Activated CD8-positive, alpha-beta T cell treated with anti-CD3 and anti-CD28 coated beads for 36 hours (primary cell): ENCODE measurements at regions of chr1 and their contacts with region 1.

Region 1: DNA sequence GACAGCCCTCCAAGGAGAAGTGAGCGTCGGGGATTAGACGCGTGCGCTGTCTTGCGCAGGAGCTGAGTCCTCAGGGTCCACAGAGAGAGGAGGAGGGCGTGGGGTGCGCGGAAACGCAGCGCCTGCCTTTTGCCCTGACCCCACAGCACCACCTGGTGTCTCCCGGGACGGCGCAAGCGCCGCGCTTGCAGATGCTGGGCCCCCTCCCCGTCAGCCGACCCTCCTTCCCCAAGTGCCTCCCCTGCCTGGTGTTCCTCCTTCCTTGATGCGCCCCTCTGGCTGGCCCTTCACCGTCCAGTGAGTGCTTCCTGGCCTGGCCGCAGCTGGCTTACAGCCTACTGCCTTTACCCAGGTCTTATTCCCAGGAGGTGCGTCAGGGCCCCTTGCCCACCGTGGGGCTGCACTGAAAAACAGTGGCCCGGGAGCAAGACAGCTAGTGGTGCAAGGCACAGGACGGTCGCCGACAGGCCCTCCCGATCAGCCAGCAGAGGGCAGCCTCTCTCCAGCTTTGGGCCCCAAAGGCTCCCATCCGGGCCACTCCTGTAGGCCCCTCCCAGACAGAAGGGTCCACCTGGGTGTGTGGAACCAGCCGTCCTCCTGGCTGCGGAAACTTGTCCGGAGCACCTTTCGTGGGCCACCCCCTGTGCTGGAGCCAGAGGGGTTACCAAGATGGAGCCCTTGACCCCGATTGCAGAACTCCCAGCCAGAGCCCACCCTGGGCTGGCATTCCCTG is 12.9 kb upstream of the PHLDA3 start:
- DNase-seq: peak; percentile 87
- ATAC-seq: peak; percentile 90
- H3K4me3 Mint-ChIP-seq: peak overlapping the region; percentile 57
- H3K27ac Mint-ChIP-seq: no peak overlapping the region
- H3K4me1 Mint-ChIP-seq: peaks cover 14% of the 10 kb centered on the region
- H3K27me3 Mint-ChIP-seq: peaks cover 22% of the 10 kb centered on the region
- CTCF ChIP-seq: peak; percentile 82

Region 2: DNA sequence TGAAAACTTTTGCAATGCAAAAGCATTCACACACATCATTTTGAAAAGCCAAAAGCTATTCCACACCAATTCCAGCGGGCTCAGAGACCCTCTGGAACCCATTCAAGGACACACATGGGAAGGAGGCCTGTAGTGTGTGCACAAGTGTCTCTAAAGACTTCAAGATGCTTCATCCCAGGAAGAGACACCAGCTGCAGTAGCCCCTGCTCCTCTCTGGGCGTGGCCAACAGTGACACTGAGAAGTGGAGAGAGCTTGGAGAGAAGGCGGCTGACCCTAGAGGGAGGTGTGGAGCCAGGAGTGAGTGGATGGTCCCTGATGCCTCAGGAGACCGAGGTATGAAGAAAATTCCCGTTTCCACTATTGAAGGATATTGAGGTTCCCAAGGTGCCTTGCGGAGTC is 45.5 kb before region 1 on chr1:
- CTCF ChIA-PET with region 1: interaction called, 30 read pairs
- POLR2A ChIA-PET with region 1: interaction called, 3 read pairs
- intact Hi-C with region 1: no loop called
- DNase-seq: no peak
- ATAC-seq: no peak
- H3K4me3 Mint-ChIP-seq: no peak overlapping the region
- H3K27ac Mint-ChIP-seq: no peak overlapping the region
- H3K4me1 Mint-ChIP-seq: peaks cover 6% of the 10 kb centered on the region
- H3K27me3 Mint-ChIP-seq: peaks cover 17% of the 10 kb centered on the region
- CTCF ChIP-seq: no peak

Region 3: GRCh38 chr1:201456499-201457309 is 25.2 kb before region 1 on chr1:
- CTCF ChIA-PET with region 1: interaction called, 149 read pairs
- POLR2A ChIA-PET with region 1: no interaction called
- intact Hi-C with region 1: no loop called
- DNase-seq: no peak
- ATAC-seq: no peak
- H3K4me3 Mint-ChIP-seq: no peak overlapping the region
- H3K27ac Mint-ChIP-seq: no peak overlapping the region
- H3K4me1 Mint-ChIP-seq: peaks cover 12% of the 10 kb centered on the region
- H3K27me3 Mint-ChIP-seq: peaks cover 10% of the 10 kb centered on the region
- CTCF ChIP-seq: no peak

Region 4: GRCh38 chr1:201468844-201469511 is 12.9 kb before region 1 on chr1 and contains the start of gene PHLDA3:
- CTCF ChIA-PET with region 1: interaction called, 13 read pairs
- POLR2A ChIA-PET with region 1: no interaction called
- intact Hi-C with region 1: no loop called
- DNase-seq: peak; percentile 73
- ATAC-seq: peak; percentile 84
- H3K4me3 Mint-ChIP-seq: peak within 1 kb of the TSS; percentile 67
- H3K27ac Mint-ChIP-seq: no peak within 1 kb of the TSS
- H3K4me1 Mint-ChIP-seq: peaks cover 3% of the 10 kb centered on the region
- H3K27me3 Mint-ChIP-seq: peaks cover 48% of the 10 kb centered on the region
- CTCF ChIP-seq: no peak
- total RNA-seq, gene PHLDA3: 6.2 to 7.9 TPM

Region 5: GRCh38 chr1:201511941-201512539 is 30.1 kb after region 1 on chr1:
- CTCF ChIA-PET with region 1: interaction called, 796 read pairs
- POLR2A ChIA-PET with region 1: interaction called, 9 read pairs
- intact Hi-C with region 1: loop called (anchors 1 kb)
- DNase-seq: no peak
- ATAC-seq: no peak
- H3K4me3 Mint-ChIP-seq: no peak overlapping the region
- H3K27ac Mint-ChIP-seq: no peak overlapping the region
- H3K4me1 Mint-ChIP-seq: peaks cover 16% of the 10 kb centered on the region
- H3K27me3 Mint-ChIP-seq: no peaks in the 10 kb centered on the region
- CTCF ChIP-seq: no peak

Region 6: DNA sequence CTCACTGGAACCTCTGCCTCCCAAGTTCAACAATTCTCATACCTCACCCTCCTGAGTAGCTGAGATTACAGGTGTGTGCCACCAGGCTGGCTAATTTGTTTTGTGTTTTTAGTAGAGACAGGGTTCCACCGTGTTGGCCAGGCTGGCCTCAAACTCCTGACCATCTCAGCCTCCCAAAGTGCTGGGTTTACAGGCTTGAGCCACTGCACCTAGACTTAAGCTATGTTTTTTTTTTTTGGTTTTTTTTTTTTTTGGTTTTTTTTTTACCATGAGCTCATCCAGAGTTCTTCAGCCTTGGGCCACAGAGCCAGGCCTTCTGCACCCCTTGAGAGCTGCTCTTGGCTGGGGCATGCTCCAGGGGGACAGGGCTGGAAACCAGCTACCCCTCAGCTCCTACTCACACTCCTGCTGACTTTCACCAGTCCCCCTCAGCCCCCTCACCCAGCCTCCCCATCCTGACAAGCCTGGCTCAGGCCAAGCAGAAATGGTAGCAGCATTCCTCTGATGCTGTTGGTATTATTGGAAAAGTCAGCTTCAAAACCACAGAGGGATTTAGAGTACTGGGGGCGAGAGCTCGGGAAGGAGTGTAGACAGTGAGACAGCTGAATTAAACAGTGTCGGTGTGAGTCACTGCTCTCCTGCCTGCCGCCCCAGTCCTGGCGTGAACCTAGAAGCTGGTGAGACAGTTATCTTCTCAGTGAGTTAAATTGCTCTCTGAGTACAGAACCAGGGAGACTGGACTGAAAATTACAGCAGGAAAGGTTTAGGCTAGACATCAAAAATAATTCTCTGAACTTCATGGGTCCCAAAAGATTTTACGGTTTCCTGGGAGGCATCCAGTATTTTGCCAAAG is 120.7 kb after region 1 on chr1:
- CTCF ChIA-PET with region 1: no interaction called
- POLR2A ChIA-PET with region 1: no interaction called
- intact Hi-C with region 1: no loop called
- DNase-seq: no peak
- ATAC-seq: no peak
- H3K4me3 Mint-ChIP-seq: no peak overlapping the region
- H3K27ac Mint-ChIP-seq: no peak overlapping the region
- H3K4me1 Mint-ChIP-seq: no peaks in the 10 kb centered on the region
- H3K27me3 Mint-ChIP-seq: no peaks in the 10 kb centered on the region
- CTCF ChIP-seq: no peak